Posterior vena cava (tissue), 2 donors: ENCODE measurements at regions of chr5 and their contacts with region 1.

Region 1: GRCh38 chr5:155556700-155557099 is 543.1 kb downstream of the KIF4B start:
- DNase-seq: no peak

Region 2: DNA sequence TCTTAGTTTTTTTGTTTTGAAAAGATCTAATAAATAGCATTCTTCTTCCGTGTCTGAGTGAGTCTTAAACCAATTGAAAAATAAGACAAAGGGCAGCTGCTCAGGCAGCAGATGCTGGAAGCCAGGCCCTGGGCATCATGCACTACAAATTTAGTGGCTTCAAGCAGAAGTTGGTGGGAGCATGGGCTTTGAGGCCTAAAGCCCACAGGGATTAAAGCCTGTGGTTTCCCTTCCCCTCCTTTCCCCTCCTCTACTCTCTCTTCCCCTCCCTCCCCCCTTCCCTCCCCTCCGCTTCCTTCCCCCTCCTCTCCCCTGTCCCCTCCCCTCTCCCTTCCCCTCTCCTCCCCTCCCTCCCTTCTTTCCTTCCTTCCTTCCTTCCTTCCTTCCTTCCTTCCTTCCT is 563.2 kb before region 1 on chr5:
- intact Hi-C with region 1: loop called in 1 of 2 experiments (anchors 5 kb)
- DNase-seq: no peak